ENCODE measurements at regions of chr11 and their contacts with region 1.

Region 1: GRCh38 chr11:86592659-86593451 is 79.6 kb downstream of the ME3 start:
- DNase-seq: peak; percentile 98

Region 2: GRCh38 chr11:86456052-86456939 is 136.6 kb before region 1 on chr11:
- in situ Hi-C with region 1: loop called (anchors 25 kb)
- DNase-seq: peak; percentile 80